ENCODE measurements at regions of chr5 and their contacts with region 1.

Region 1: GRCh38 chr5:137688210-137688840 is 47.6 kb downstream of the KLHL3 start:
- DNase-seq: no peak

Region 2: DNA sequence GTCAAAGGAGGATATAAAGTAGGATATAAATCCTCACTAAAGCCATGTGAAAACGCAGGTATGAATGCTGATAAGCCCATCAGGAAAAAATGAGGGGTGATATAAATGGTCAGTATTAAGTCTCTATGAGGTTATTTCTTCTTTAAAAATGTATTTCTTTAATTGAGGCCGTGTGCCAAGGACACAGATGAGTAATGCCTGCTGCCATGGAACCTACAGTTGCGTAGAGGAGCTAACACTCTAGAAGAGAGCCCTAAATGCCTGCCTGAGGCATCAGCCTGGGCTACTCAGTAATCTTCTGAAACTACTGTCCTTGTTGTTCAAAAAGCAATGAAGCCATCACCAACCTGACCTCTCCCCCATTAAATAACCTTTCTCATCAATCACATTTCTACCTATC is 37.3 kb before region 1 on chr5:
- intact Hi-C with region 1: loop called in 1 of 2 experiments (anchors 2 kb)
- DNase-seq: no peak

Measured in posterior vena cava (tissue), 2 donors.